ENCODE measurements at regions of chr22 and their contacts with region 1.

Region 1: GRCh38 chr22:24175160-24175808 is 6.0 kb upstream of the SUSD2 start:
- DNase-seq: peak; percentile 85 to 90
- ATAC-seq: peak; percentile 84 to 91 (median 86)
- H3K4me3 ChIP-seq: no peak overlapping the region
- H3K27ac ChIP-seq: peak overlapping the region; percentile 30
- H3K4me1 ChIP-seq: no peaks in the 10 kb centered on the region
- H3K27me3 ChIP-seq: no peaks in the 10 kb centered on the region
- CTCF ChIP-seq: peak; percentile 76

Region 2: DNA sequence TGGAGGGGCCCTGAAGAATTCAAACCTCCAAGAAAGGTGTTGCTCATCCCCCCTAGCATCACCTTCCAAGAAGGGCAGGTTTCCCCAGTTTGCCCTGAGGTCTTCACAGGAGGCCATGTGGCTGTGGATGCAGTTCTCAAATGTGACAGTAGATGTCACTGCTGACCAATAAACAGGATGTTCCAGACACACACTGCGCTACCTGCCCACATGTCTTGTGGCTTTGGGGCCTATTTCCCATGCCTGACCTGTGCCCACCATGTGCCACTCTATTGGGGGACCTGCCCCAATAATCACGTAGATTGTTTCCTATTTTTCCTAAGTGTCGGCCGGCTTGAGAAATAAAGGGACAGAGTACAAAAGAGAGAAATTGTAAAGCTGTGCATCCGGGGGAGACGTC is 190.9 kb before region 1 on chr22:
- intact Hi-C with region 1: loop called (anchors 5 to 10 kb)
- DNase-seq: peak in 1 of 2 donors; percentile 42
- ATAC-seq: peak; percentile 52 to 79 (median 69)
- H3K4me3 ChIP-seq: no peak overlapping the region
- H3K27ac ChIP-seq: no peak overlapping the region
- H3K4me1 ChIP-seq: no peaks in the 10 kb centered on the region
- H3K27me3 ChIP-seq: no peaks in the 10 kb centered on the region
- CTCF ChIP-seq: peak; percentile 80

Region 3: GRCh38 chr22:24060375-24060788 is 114.9 kb before region 1 on chr22:
- intact Hi-C with region 1: no loop called
- DNase-seq: no peak
- ATAC-seq: peak in 3 of 4 donors; percentile 46 to 64 (median 50)
- H3K4me3 ChIP-seq: no peak overlapping the region
- H3K27ac ChIP-seq: peak overlapping the region; percentile 27
- H3K4me1 ChIP-seq: peaks cover 4% of the 10 kb centered on the region
- H3K27me3 ChIP-seq: no peaks in the 10 kb centered on the region
- CTCF ChIP-seq: no peak

Region 4: GRCh38 chr22:24088816-24089215 is 86.5 kb before region 1 on chr22:
- intact Hi-C with region 1: no loop called
- DNase-seq: no peak
- ATAC-seq: no peak
- H3K4me3 ChIP-seq: no peak overlapping the region
- H3K27ac ChIP-seq: no peak overlapping the region
- H3K4me1 ChIP-seq: no peaks in the 10 kb centered on the region
- H3K27me3 ChIP-seq: no peaks in the 10 kb centered on the region
- CTCF ChIP-seq: no peak